Activated CD4-positive, alpha-beta memory T cell treated with anti-CD3 and anti-CD28 coated beads for 36 hours (primary cell): ENCODE measurements at regions of chr19 and their contacts with region 1.

Region 1: DNA sequence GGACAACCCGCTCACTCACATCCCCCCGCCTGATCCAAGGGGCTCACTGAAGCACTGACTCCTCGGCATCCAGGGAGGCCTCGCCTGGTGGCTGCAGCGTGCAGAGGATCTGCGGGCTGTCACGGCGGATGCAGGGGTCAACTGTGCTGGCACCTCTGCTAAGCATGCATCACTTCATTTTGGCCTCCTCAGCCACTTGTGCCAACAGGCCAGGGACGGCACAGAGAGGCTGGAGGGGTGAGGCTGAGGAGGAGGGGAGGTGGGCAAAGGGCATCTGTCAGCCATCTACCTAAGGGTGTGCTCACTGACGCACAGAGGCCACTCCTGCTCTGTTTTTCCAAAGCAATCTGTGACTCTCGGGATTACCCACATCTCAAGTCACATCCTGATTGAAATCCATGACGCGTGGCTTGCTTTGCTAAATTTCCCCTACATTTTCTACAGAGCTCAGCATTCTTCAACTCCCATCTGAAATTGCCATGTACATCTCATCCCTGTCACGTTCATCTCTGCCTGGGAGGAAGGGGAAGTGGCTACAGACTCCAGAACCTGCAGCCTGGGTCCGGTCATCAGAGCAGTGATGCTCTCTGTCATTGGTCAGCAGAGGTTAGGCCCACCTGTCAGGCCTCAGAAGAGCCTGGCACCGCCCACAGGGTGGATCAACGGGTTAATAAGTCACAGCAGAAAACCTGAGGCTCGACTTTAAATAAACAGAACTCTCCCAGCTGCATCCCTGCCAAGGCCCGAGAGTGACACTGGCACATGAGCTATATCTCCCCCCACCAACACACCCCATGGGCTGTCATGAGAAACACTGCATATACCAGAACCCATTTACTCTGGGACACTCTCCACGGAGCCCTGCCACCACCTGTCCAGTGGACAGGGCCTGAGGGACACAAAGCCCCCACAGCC is 17.6 kb downstream of the ELL start:
- DNase-seq: no peak
- H3K4me3 Mint-ChIP-seq: no peak overlapping the region
- H3K27ac Mint-ChIP-seq: peak overlapping the region; percentile 83
- H3K4me1 Mint-ChIP-seq: peaks cover 87% of the 10 kb centered on the region
- H3K27me3 Mint-ChIP-seq: no peaks in the 10 kb centered on the region

Region 2: DNA sequence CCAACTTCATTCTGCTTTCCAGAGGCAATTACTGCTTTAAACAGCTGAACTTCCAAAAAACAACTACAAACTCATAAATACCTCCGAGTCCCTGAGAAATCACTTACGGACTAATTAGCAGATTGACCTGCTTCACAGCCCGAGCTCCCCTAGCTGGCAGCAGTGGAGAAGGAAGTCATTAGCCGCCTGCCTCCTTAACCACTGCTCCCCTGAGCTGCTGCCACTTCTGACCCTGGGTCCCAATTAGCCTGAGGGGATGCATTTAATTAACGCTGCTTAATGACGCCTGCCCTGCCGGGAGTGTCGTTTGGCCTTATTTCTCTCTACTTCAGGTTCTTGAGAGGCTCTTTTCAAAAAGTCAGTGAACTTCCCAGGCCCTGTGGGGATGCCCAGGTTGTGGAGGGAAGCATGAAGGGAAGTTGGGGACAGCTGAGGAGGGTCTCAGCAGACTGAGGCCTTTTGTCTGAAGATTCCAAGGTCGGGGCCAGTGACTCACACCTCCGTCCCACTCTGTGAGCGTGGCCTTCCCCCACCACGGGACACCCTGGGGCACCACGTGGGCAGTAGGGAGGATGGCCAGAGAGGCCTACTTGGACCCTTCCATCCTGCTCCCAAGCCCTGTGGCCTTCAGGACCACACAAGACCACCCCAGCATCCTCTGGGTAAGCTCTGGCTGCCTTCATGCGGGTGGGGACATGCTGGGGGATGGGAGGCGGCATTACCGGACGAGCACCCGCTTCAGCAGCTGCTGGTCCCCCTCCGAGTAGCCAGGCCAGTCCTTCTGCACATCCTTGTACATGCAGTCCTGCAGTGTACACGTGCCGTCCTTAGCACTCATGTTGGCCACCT is 46.5 kb before region 1 on chr19:
- CTCF ChIA-PET with region 1: interaction called, 10 read pairs
- POLR2A ChIA-PET with region 1: no interaction called
- intact Hi-C with region 1: no loop called
- DNase-seq: no peak
- H3K4me3 Mint-ChIP-seq: no peak overlapping the region
- H3K27ac Mint-ChIP-seq: no peak overlapping the region
- H3K4me1 Mint-ChIP-seq: peaks cover 2% of the 10 kb centered on the region
- H3K27me3 Mint-ChIP-seq: no peaks in the 10 kb centered on the region